ENCODE measurements at regions of chr1 and their contacts with region 1.

Region 1: GRCh38 chr1:33616773-33617172 is 144.3 kb downstream of the ZSCAN20 start:
- DNase-seq: no peak
- ATAC-seq: no peak

Region 2: DNA sequence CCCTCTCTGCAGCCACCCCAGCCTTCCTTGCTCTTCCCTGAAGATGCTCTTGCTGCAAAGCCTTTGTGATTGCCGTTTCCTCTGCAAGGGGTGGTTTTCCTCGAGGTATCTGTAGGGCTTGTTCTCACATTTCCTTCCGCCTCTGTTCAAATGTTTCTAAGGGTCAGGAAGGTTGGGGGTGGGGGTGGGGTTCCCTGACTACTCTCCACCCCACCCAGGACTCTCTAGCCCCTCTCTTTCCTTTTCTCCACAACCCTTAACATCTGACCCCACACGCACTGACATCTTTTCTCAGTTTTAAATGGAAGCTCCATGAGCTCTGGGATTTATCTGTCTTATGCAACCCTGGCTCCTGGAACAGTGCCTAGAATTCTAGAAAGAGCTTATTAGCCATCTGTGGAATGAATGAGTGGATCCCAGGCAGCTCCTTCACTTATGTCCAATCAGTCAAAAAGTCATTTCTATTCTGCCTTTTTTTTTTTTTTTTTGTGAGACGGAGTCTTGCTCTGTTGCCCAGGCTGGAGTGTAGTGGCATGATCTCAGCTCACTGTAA is 387.8 kb before region 1 on chr1:
- intact Hi-C with region 1: loop called (anchors 10 kb)
- DNase-seq: no peak
- ATAC-seq: peak; percentile 95